ENCODE measurements at regions of chr1 and their contacts with region 1.

Region 1: DNA sequence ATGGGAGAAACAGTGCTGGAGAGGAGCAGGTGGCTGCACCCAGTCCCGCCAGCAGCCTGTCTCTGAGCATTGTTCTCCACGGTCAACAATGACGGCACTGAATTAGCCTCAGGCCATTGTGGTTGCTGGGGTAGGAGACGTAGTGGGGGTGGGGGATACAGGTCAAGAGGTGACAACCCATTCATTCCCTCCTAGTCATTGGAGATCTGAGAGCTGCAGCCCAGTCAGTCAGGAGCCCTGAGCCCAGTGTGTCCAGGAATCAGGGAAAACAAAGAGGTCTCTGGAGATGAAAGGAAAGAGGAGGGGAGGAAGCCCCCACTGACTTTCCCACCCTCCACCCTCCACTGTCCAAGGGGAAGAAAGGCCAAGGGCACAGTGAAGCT is 15.3 kb downstream of the SMIM12 start:
- DNase-seq: peak; percentile 77
- H3K4me3 ChIP-seq: no peak overlapping the region
- H3K27ac ChIP-seq: peak overlapping the region; percentile 73
- H3K4me1 ChIP-seq: peaks cover 30% of the 10 kb centered on the region
- H3K27me3 ChIP-seq: no peaks in the 10 kb centered on the region
- CTCF ChIP-seq: no peak
- POLR2A ChIP-seq: no peak

Region 2: DNA sequence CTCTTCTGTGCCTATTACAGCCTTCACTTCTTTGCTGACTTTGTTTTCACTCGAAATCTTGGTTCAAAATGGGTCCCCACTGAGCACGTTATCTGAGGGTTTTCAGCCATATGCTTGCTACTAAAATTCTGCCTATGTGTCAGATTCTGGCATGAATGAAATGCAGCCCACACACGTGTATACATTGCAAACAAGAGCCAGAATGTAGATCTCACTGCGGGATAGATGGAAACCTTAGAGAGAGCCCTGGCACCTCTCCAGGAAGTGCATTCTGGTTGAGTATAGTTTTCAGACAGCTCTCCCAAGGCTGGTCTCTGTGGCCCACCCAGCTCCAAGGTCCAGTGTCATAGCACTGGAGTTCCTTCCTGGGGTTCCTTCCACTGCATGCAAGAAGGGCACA is 324.1 kb before region 1 on chr1:
- CTCF ChIA-PET with region 1: no interaction called
- POLR2A ChIA-PET with region 1: no interaction called
- dilution Hi-C with region 1: no loop called
- intact Hi-C with region 1: no loop called
- DNase-seq: no peak
- H3K4me3 ChIP-seq: no peak overlapping the region
- H3K27ac ChIP-seq: no peak overlapping the region
- H3K4me1 ChIP-seq: no peaks in the 10 kb centered on the region
- H3K27me3 ChIP-seq: no peaks in the 10 kb centered on the region
- CTCF ChIP-seq: no peak
- POLR2A ChIP-seq: no peak

Region 3: GRCh38 chr1:34582356-34582755 is 261.9 kb before region 1 on chr1:
- CTCF ChIA-PET with region 1: no interaction called
- POLR2A ChIA-PET with region 1: no interaction called
- dilution Hi-C with region 1: no loop called
- intact Hi-C with region 1: no loop called
- DNase-seq: no peak
- H3K4me3 ChIP-seq: no peak overlapping the region
- H3K27ac ChIP-seq: no peak overlapping the region
- H3K4me1 ChIP-seq: no peaks in the 10 kb centered on the region
- H3K27me3 ChIP-seq: no peaks in the 10 kb centered on the region
- CTCF ChIP-seq: no peak
- POLR2A ChIP-seq: no peak

Region 4: GRCh38 chr1:34825455-34826091 is 18.7 kb before region 1 on chr1:
- CTCF ChIA-PET with region 1: no interaction called
- POLR2A ChIA-PET with region 1: no interaction called
- dilution Hi-C with region 1: no loop called
- intact Hi-C with region 1: loop called (anchors 1 kb)
- DNase-seq: peak; percentile 97
- H3K4me3 ChIP-seq: no peak overlapping the region
- H3K27ac ChIP-seq: no peak overlapping the region
- H3K4me1 ChIP-seq: no peaks in the 10 kb centered on the region
- H3K27me3 ChIP-seq: peaks cover 2 to 3% of the 10 kb centered on the region in 2 experiments
- CTCF ChIP-seq: no peak
- POLR2A ChIP-seq: no peak

Region 5: GRCh38 chr1:34831721-34832246 is 12.5 kb before region 1 on chr1:
- CTCF ChIA-PET with region 1: interaction called, 3 read pairs
- POLR2A ChIA-PET with region 1: no interaction called
- dilution Hi-C with region 1: no loop called
- intact Hi-C with region 1: loop called (anchors 1 kb)
- DNase-seq: peak; percentile 82
- H3K4me3 ChIP-seq: no peak overlapping the region
- H3K27ac ChIP-seq: no peak overlapping the region
- H3K4me1 ChIP-seq: peaks cover 2% of the 10 kb centered on the region
- H3K27me3 ChIP-seq: peaks cover 0 to 2% of the 10 kb centered on the region in 2 experiments
- CTCF ChIP-seq: no peak
- POLR2A ChIP-seq: no peak

Region 6: GRCh38 chr1:34907487-34908090 is 63.3 kb after region 1 on chr1:
- CTCF ChIA-PET with region 1: no interaction called
- POLR2A ChIA-PET with region 1: no interaction called
- dilution Hi-C with region 1: no loop called
- intact Hi-C with region 1: no loop called
- DNase-seq: peak; percentile 11
- H3K4me3 ChIP-seq: no peak overlapping the region
- H3K27ac ChIP-seq: no peak overlapping the region
- H3K4me1 ChIP-seq: no peaks in the 10 kb centered on the region
- H3K27me3 ChIP-seq: no peaks in the 10 kb centered on the region
- CTCF ChIP-seq: no peak
- POLR2A ChIP-seq: no peak

Measured in endothelial cell of umbilical vein (primary cell).